CD8-positive, alpha-beta T cell (primary cell): ENCODE measurements at regions of chr12 and their contacts with region 1.

Region 1: DNA sequence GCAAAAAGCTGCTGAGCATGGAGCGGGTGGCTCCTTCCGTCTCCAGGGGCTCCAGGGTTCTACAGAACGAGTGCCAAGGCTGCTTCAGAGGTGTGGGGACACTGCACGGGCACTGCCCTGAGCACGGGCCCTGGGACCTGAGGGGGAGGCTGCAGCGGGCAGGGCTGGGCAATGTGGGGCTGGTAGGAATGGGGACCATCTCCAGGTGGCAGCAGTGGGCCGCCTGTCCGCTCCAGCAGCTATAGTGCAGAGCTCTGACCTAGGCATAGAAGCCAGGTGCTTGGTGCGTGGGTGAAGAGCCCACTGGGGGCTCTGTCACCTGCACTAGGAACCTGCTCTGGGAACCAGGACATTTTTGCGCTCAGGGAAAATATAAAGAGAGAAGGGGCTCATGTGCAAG is 22.3 kb downstream of the HDAC7 start:
- DNase-seq: peak in 6 of 9 experiments; percentile 47 to 73 (median 64)
- ATAC-seq: peak; percentile 90
- H3K4me3 ChIP-seq: no peak overlapping the region
- H3K4me3 Mint-ChIP-seq: no peak overlapping the region
- H3K27ac ChIP-seq: no peak overlapping the region
- H3K27ac Mint-ChIP-seq: peak overlapping the region; percentile 85
- H3K4me1 ChIP-seq: peaks cover 44% of the 10 kb centered on the region
- H3K4me1 Mint-ChIP-seq: peaks cover 36% of the 10 kb centered on the region
- H3K27me3 ChIP-seq: no peaks in the 10 kb centered on the region
- H3K27me3 Mint-ChIP-seq: no peaks in the 10 kb centered on the region
- CTCF ChIP-seq: peak; percentile 35

Region 2: GRCh38 chr12:47812797-47813510 is 15.5 kb after region 1 on chr12:
- CTCF ChIA-PET with region 1: interaction called, 25 read pairs
- POLR2A ChIA-PET with region 1: interaction called, 4 read pairs
- intact Hi-C with region 1: loop called in 1 of 2 experiments (anchors 2 kb)
- DNase-seq: peak; percentile 77 to 95 (median 92)
- ATAC-seq: peak; percentile 73
- H3K4me3 ChIP-seq: peak overlapping the region; percentile 44 to 59
- H3K4me3 Mint-ChIP-seq: peak overlapping the region; percentile 82
- H3K27ac ChIP-seq: peak overlapping the region; percentile 65 to 73
- H3K27ac Mint-ChIP-seq: peak overlapping the region; percentile 97
- H3K4me1 ChIP-seq: peaks cover 95% of the 10 kb centered on the region
- H3K4me1 Mint-ChIP-seq: peaks cover 93% of the 10 kb centered on the region
- H3K27me3 ChIP-seq: no peaks in the 10 kb centered on the region
- H3K27me3 Mint-ChIP-seq: no peaks in the 10 kb centered on the region
- CTCF ChIP-seq: no peak

Region 3: GRCh38 chr12:47819896-47820630 is 22.6 kb after region 1 on chr12 and contains the start of gene HDAC7:
- CTCF ChIA-PET with region 1: interaction called, 24 read pairs
- POLR2A ChIA-PET with region 1: interaction called, 4 read pairs
- intact Hi-C with region 1: no loop called
- DNase-seq: peak; percentile 39 to 85 (median 73)
- ATAC-seq: peak; percentile 51
- H3K4me3 ChIP-seq: peak within 1 kb of the TSS; percentile 78 to 83
- H3K4me3 Mint-ChIP-seq: peak within 1 kb of the TSS; percentile 95
- H3K27ac ChIP-seq: peak within 1 kb of the TSS; percentile 78 to 81
- H3K27ac Mint-ChIP-seq: peak within 1 kb of the TSS; percentile 96
- H3K4me1 ChIP-seq: peaks cover 80% of the 10 kb centered on the region
- H3K4me1 Mint-ChIP-seq: peaks cover 87% of the 10 kb centered on the region
- H3K27me3 ChIP-seq: no peaks in the 10 kb centered on the region
- H3K27me3 Mint-ChIP-seq: no peaks in the 10 kb centered on the region
- CTCF ChIP-seq: no peak
- total RNA-seq, gene HDAC7: 87.3 to 91.4 TPM

Region 4: DNA sequence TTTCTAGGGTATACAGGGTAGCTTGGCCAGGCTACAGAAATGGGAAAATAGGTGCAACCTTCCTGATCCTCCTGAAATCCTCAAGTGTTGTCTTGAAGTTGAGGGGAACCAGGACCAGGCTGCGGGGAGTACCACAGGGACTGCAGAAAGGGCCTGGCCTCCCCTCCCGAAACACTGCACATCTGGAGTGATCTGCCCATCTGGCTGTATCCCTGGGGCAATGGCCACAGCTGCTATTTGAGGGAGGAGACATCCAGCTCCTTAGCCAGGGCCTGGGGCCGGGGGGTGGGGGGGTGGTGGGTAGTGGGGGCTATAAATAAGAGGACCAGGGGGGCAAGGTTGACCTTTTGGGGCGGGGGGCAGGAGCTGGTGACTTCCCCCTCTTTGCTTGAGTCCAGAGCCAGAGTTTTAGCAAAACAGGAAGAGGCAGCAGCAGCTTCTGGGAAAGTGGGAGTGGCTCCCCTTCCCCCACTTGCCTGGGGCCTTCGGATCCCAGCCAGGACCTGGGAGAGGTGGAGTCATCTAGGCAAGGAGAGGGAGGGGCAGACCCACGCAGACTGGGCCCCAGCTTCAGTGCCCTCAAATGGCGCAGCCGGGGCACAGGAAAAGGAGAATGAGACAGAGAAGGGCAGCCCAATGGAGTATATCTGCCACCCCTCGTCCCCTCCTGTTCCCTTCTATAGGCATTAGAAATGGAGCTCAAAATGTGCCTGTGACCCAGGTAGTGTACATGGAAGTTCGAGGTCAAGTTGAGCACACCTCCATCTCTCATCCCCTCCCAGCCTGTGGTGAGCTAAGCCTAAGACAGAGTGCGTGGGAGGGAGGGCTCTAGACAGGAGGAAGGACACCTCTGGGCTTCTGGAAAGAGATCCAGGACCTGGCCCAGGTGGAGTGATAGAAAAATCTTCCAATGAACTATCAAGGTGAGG is 31.4 kb after region 1 on chr12:
- CTCF ChIA-PET with region 1: interaction called, 728 read pairs
- POLR2A ChIA-PET with region 1: interaction called, 12 read pairs
- intact Hi-C with region 1: no loop called
- DNase-seq: no peak
- ATAC-seq: no peak
- H3K4me3 ChIP-seq: no peak overlapping the region
- H3K4me3 Mint-ChIP-seq: no peak overlapping the region
- H3K27ac ChIP-seq: no peak overlapping the region
- H3K27ac Mint-ChIP-seq: peak overlapping the region; percentile 64
- H3K4me1 ChIP-seq: peaks cover 95% of the 10 kb centered on the region
- H3K4me1 Mint-ChIP-seq: peaks cover 84% of the 10 kb centered on the region
- H3K27me3 ChIP-seq: no peaks in the 10 kb centered on the region
- H3K27me3 Mint-ChIP-seq: no peaks in the 10 kb centered on the region
- CTCF ChIP-seq: no peak